ENCODE measurements at regions of chr6 and their contacts with region 1.

Region 1: DNA sequence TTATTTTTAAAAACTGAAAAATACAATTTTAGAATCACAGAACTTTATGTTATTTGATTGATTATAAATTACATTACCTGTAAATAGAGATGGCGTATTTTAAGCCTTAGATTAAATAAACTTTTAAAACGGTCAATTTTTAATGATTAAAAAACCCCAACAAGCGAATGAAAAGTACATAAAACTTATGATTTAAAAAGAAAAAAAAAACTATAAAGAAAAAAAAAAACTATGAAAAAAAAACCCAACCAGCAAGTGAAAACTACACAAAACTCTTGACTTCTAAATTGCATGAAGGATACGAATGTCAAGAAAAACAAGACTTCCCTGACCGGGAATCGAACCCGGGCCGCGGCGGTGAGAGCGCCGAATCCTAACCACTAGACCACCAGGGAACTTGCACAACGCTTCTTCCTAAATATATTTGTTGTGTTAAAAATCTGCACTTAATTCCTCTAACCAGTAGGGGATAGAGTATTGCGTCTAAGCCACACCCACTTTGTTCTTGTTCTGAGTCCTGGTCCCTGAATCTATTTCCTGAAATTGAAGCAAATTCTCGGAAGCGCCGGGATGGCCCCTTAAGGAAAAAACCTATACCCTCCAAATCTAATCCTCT is 10.7 kb upstream of the NCOA7 start:
- DNase-seq: peak; percentile 68
- H3K4me3 Mint-ChIP-seq: no peak overlapping the region
- H3K27ac Mint-ChIP-seq: no peak overlapping the region
- H3K4me1 Mint-ChIP-seq: peaks cover 12% of the 10 kb centered on the region
- H3K27me3 Mint-ChIP-seq: peaks cover 15% of the 10 kb centered on the region

Region 2: DNA sequence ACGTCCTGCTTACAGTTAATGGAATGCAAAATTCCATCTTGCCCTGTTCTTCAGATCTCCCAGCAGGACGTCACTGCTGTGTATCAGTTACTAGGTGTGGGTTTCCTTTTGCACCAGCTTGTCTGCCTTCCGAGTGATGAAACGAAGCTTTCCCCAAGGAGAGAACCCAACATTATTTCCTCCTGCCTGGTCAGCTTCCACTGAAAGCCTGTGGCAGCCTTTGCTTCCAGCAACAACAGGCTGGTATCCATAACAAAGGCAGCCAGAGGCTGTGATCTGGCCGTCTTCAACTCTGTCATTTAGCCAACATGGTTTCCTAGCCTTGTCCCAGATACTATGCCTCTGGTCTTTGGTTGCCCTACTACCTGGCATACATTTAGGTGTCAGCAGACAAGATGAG is 109.5 kb before region 1 on chr6:
- intact Hi-C with region 1: no loop called
- DNase-seq: no peak
- H3K4me3 Mint-ChIP-seq: no peak overlapping the region
- H3K27ac Mint-ChIP-seq: no peak overlapping the region
- H3K4me1 Mint-ChIP-seq: no peaks in the 10 kb centered on the region
- H3K27me3 Mint-ChIP-seq: peaks cover 9% of the 10 kb centered on the region

Region 3: GRCh38 chr6:125804264-125804663 is 24.2 kb after region 1 on chr6:
- intact Hi-C with region 1: loop called (anchors 1 kb)
- DNase-seq: peak; percentile 14
- H3K4me3 Mint-ChIP-seq: peak overlapping the region; percentile 16
- H3K27ac Mint-ChIP-seq: peak overlapping the region; percentile 66
- H3K4me1 Mint-ChIP-seq: peaks cover 76% of the 10 kb centered on the region
- H3K27me3 Mint-ChIP-seq: no peaks in the 10 kb centered on the region

Region 4: GRCh38 chr6:125904871-125905270 is 124.8 kb after region 1 on chr6:
- intact Hi-C with region 1: loop called (anchors 1 kb)
- DNase-seq: peak; percentile 42
- H3K4me3 Mint-ChIP-seq: peak overlapping the region; percentile 60
- H3K27ac Mint-ChIP-seq: peak overlapping the region; percentile 93
- H3K4me1 Mint-ChIP-seq: peaks cover 63% of the 10 kb centered on the region
- H3K27me3 Mint-ChIP-seq: no peaks in the 10 kb centered on the region

Region 5: DNA sequence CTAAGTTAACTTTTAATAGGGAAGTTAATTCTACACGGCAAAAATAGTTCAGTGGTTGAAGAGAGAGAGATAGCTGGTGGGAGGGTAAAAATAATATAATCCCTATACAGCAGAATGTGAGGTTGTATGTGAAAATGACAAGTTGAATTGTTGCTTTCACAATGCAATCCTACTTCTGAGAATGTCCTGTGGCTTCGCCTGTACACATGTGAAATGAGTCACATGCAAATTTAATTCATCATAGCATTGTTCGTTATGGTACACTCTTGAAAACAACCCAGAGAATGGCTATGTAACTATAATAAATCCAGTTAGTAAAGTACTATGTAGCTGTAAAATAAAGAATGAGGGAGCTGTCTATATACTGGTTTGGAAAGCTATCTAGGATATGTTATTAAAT is 130.5 kb after region 1 on chr6:
- intact Hi-C with region 1: loop called (anchors 1 kb)
- DNase-seq: no peak
- H3K4me3 Mint-ChIP-seq: peak overlapping the region; percentile 40
- H3K27ac Mint-ChIP-seq: peak overlapping the region; percentile 74
- H3K4me1 Mint-ChIP-seq: peaks cover 47% of the 10 kb centered on the region
- H3K27me3 Mint-ChIP-seq: no peaks in the 10 kb centered on the region

Region 6: GRCh38 chr6:125918681-125919566 is 138.9 kb after region 1 on chr6:
- intact Hi-C with region 1: loop called (anchors 1 kb)
- DNase-seq: peak; percentile 66
- H3K4me3 Mint-ChIP-seq: peak overlapping the region; percentile 88
- H3K27ac Mint-ChIP-seq: peak overlapping the region; percentile 94
- H3K4me1 Mint-ChIP-seq: peaks cover 58% of the 10 kb centered on the region
- H3K27me3 Mint-ChIP-seq: no peaks in the 10 kb centered on the region

Region 7: GRCh38 chr6:125974214-125974866 is 194.3 kb after region 1 on chr6:
- intact Hi-C with region 1: loop called (anchors 1 kb)
- DNase-seq: no peak
- H3K4me3 Mint-ChIP-seq: no peak overlapping the region
- H3K27ac Mint-ChIP-seq: peak overlapping the region; percentile 10
- H3K4me1 Mint-ChIP-seq: peaks cover 6% of the 10 kb centered on the region
- H3K27me3 Mint-ChIP-seq: no peaks in the 10 kb centered on the region

Region 8: DNA sequence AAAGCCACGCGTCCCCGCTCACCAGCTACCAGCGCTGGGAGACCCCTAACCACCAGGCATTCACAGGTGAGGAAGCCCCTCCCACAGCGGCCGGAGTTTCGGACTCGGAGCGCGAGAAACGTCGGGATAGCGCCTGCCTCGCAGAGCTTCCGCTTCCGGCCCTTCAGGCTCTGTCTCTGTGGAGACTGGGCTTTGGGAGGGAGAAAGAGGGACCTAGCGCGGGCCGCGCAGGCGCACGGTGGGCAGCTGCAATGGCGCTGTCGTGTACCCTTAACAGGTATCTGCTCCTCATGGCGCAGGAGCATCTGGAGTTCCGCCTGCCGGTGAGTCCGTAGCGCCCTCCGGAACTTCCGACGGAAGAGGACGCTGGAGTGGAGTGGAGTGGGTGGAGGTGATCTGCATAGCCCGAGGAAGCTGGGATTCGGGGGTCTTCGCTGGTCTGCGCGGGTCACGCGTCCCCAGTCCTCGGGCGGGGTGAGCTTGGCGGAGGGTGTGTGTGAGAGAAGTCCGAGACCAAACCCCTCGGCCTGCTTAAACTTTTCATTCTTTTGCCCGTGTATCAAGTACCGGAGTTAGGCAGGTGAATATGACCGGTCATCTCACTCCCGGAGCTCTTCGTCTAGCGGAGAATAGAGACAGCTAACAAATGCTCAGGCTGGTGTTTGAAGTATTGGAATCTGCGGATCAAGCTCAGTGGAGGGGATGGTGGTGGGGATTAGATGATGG is 206.4 kb after region 1 on chr6 and contains the start of gene TRMT11:
- intact Hi-C with region 1: loop called (anchors 1 kb)
- DNase-seq: peak; percentile 72
- H3K4me3 Mint-ChIP-seq: no peak within 1 kb of the TSS
- H3K27ac Mint-ChIP-seq: no peak within 1 kb of the TSS
- H3K4me1 Mint-ChIP-seq: peaks cover 8% of the 10 kb centered on the region
- H3K27me3 Mint-ChIP-seq: no peaks in the 10 kb centered on the region
- total RNA-seq, gene TRMT11: 27.9 and 29.1 TPM in 2 replicates

Region 9: GRCh38 chr6:127391094-127391953 is 1611.3 kb after region 1 on chr6:
- intact Hi-C with region 1: no loop called
- DNase-seq: no peak
- H3K4me3 Mint-ChIP-seq: no peak overlapping the region
- H3K27ac Mint-ChIP-seq: no peak overlapping the region
- H3K4me1 Mint-ChIP-seq: no peaks in the 10 kb centered on the region
- H3K27me3 Mint-ChIP-seq: no peaks in the 10 kb centered on the region